OCI-LY7 (cell line): ENCODE measurements at regions of chr1 and their contacts with region 1.

Region 1: GRCh38 chr1:212152308-212152693 is 116.8 kb downstream of the DTL start:
- DNase-seq: no peak
- H3K4me3 ChIP-seq: no peak overlapping the region
- H3K27ac ChIP-seq: no peak overlapping the region
- H3K4me1 ChIP-seq: no peaks in the 10 kb centered on the region
- CTCF ChIP-seq: no peak

Region 2: DNA sequence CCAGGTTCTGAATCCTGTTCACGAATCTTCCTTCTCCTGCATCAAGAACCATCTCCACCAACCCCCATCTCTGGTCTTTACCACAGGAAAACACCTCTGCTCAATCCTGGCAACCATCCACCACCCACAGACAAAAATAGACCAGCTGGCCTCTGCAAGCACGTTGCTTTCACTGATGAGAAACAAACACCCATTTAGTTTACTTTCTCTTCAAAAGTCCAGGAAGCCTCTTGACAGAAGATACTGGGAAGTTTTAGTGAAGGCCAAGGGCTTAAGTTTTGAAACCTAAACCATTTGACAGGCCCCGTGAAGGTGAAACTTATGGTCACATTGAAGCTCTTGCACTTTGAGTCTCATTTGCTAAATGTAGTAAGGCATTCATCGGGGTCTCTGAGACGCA is 10.3 kb after region 1 on chr1:
- CTCF ChIA-PET with region 1: no interaction called
- POLR2A ChIA-PET with region 1: interaction called, 12 read pairs
- intact Hi-C with region 1: no loop called
- DNase-seq: no peak
- H3K4me3 ChIP-seq: no peak overlapping the region
- H3K27ac ChIP-seq: no peak overlapping the region
- H3K4me1 ChIP-seq: no peaks in the 10 kb centered on the region
- CTCF ChIP-seq: no peak